ENCODE measurements at regions of chr4 and their contacts with region 1.

Region 1: GRCh38 chr4:70651864-70652506 is 14.3 kb downstream of the JCHAIN start:
- DNase-seq: peak in 6 of 9 donors; percentile 12 to 47 (median 40)
- ATAC-seq: peak; percentile 61
- H3K4me3 ChIP-seq: no peak overlapping the region
- H3K4me3 Mint-ChIP-seq: no peak overlapping the region
- H3K27ac ChIP-seq: no peak overlapping the region
- H3K27ac Mint-ChIP-seq: no peak overlapping the region
- H3K4me1 ChIP-seq: no peaks in the 10 kb centered on the region
- H3K4me1 Mint-ChIP-seq: peaks cover 0 to 6% (median 0%) of the 10 kb centered on the region in 7 donors
- H3K27me3 ChIP-seq: no peaks in the 10 kb centered on the region
- H3K27me3 Mint-ChIP-seq: peaks cover 0 to 25% (median 3%) of the 10 kb centered on the region in 5 donors

Region 2: DNA sequence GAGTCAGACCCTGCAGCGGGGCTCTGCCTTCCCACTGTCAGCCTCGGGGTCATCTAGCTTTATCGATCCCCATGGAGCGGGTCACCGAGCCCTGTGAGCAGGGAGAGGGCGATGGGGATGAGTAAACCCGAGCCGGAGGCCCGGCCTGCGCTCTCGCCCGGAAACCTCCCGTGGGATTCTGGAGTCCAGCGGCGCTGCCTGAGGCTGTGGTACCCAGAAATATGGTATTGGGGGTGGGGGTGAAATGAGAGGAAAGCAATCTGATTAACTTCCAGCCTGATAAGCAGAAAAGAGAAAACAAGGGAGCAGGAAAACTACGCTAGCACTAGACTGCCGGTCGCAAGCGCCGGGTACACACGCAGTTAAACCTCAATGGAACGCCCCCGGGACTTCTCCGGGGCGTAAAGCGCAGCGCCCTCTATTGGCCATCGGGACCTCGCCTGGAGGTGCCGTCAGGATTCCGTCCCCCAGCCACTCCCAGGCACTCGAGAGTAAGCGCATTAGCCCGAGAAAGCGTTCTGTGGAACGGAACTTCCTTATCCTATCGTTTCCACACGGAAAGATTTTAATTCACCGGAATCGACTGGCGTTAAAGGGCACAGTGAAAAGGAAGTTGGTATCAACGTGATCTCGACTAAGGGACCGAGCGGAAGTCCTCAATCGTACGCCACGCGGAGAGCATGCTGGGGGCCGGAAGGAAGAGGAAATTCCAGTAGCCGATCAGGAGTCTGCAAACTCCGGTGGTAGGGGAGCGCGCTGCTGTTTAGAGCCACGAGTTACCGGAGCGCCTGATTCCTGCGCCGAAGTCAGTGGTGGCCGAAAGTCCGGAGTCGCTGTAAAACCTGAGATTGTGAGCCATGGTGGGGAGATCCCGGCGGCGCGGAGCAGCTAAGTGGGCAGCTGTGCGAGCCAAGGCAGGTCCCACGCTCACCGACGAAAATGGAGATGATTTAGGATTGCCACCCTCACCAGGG is 36.1 kb after region 1 on chr4 and contains the start of gene UTP3:
- CTCF ChIA-PET with region 1: interaction called, 4 read pairs
- POLR2A ChIA-PET with region 1: no interaction called
- intact Hi-C with region 1: loop called (anchors 1 kb)
- DNase-seq: peak; percentile 85 to 95 (median 92)
- ATAC-seq: peak; percentile 95
- H3K4me3 ChIP-seq: peak within 1 kb of the TSS; percentile 69
- H3K4me3 Mint-ChIP-seq: peak within 1 kb of the TSS; percentile 93 to 99 (median 98)
- H3K27ac ChIP-seq: peak within 1 kb of the TSS; percentile 94
- H3K27ac Mint-ChIP-seq: peak within 1 kb of the TSS; percentile 93 to 100 (median 99)
- H3K4me1 ChIP-seq: peaks cover 7 to 13% of the 10 kb centered on the region in 2 donors
- H3K4me1 Mint-ChIP-seq: peaks cover 12 to 48% (median 46%) of the 10 kb centered on the region in 7 donors
- H3K27me3 ChIP-seq: no peaks in the 10 kb centered on the region
- H3K27me3 Mint-ChIP-seq: no peaks in the 10 kb centered on the region
- total RNA-seq, gene UTP3: 17.4 to 44.9 (median 36.5) TPM

Region 3: DNA sequence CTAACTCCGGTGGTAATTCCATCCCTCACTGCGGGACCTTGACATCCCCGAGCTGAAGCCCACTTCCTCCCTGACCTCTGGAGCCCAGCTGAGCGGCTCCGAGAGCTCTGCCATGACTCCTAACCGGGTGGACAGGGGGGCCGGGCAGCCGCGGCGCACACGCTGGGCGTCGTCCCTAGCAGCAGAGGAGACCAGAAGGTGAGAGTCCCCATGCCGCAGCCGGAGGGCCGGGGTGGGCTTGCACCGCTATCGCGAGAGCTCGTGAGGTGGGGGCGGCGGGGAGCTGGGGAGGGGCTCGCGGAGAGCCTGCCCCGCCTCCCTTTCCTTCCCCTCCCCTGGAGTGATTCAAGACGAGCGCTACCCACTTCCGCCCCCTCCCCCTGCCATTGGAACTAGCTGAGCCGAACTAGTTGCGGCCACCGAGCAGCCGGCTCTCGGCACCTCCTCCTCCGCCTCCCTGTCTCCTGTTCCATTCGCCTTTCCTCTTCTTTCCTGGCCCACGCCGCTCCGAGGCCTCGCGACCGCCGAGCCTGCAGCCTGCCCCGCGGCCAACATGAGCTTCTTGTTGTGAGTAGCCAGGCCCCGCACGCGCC is 250.1 kb after region 1 on chr4 and contains the start of gene MOB1B:
- CTCF ChIA-PET with region 1: interaction called, 5 read pairs
- POLR2A ChIA-PET with region 1: no interaction called
- intact Hi-C with region 1: loop called (anchors 1 to 5 kb)
- DNase-seq: peak; percentile 59 to 89 (median 84)
- ATAC-seq: peak; percentile 98
- H3K4me3 ChIP-seq: peak within 1 kb of the TSS; percentile 87
- H3K4me3 Mint-ChIP-seq: peak within 1 kb of the TSS; percentile 94 to 100 (median 98)
- H3K27ac ChIP-seq: peak within 1 kb of the TSS; percentile 78
- H3K27ac Mint-ChIP-seq: peak within 1 kb of the TSS; percentile 86 to 96 (median 89)
- H3K4me1 ChIP-seq: peaks cover 6 to 14% of the 10 kb centered on the region in 2 donors
- H3K4me1 Mint-ChIP-seq: peaks cover 23 to 46% (median 40%) of the 10 kb centered on the region in 7 donors
- H3K27me3 ChIP-seq: no peaks in the 10 kb centered on the region
- H3K27me3 Mint-ChIP-seq: peaks cover 0 to 2% (median 0%) of the 10 kb centered on the region in 5 donors
- total RNA-seq, gene MOB1B: 12.0 to 20.3 (median 13.5) TPM

Region 4: DNA sequence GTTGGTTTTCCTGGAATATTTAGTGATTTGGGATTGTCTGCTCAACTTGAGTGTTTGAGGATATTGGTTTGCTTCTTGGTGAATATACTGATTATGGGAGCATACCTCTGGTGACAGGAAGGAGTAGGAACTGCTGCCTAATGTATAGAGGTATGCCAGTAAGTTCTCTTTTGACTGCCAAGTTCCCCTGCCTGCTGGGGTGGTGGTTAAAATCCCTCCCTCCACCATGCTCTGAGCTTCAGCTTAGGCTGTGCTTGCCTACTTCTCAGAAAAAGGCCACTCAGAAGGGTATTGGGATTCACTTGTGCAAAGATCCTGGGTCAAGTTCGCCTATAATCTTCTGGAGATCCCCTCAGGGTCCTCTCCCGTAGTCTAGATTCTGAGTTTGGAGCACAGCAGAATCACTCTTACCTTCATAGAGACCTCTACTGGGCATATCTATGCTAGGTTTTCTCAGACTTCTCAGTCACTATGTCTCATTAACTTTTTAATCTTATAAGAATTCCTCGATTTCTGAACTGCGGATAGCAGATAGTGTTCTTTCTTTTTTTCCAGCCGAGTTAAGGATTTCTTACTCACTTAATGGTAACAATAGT is 296.8 kb after region 1 on chr4:
- CTCF ChIA-PET with region 1: no interaction called
- POLR2A ChIA-PET with region 1: no interaction called
- intact Hi-C with region 1: loop called in 1 of 2 experiments (anchors 1 kb)
- DNase-seq: no peak
- ATAC-seq: peak; percentile 35
- H3K4me3 ChIP-seq: no peak overlapping the region
- H3K4me3 Mint-ChIP-seq: no peak overlapping the region
- H3K27ac ChIP-seq: no peak overlapping the region
- H3K27ac Mint-ChIP-seq: peak overlapping the region in 1 of 9 donors; percentile 11
- H3K4me1 ChIP-seq: no peaks in the 10 kb centered on the region
- H3K4me1 Mint-ChIP-seq: peaks cover 8 to 48% (median 30%) of the 10 kb centered on the region in 7 donors
- H3K27me3 ChIP-seq: no peaks in the 10 kb centered on the region
- H3K27me3 Mint-ChIP-seq: no peaks in the 10 kb centered on the region

Region 5: DNA sequence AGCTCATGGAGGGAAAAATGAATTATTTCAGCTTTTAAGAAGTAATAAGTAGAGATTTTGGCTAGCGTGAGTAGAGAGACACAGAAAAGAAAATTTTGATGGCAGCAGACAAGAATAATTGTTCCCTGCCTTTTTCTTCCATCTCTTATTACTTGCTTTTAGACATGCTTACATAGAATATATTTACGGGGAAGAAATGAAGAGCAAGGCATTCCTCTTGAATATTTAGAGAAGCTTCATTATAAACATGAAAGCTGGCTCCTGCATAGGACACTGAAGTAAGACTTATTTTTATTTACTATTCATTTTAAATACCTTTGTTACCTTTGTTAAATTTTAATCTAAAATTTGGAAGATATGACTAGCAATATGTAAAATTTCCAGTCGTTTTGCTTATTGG is 373.7 kb after region 1 on chr4:
- CTCF ChIA-PET with region 1: interaction called, 4 read pairs
- POLR2A ChIA-PET with region 1: no interaction called
- intact Hi-C with region 1: loop called in 1 of 2 experiments (anchors 1 kb)
- DNase-seq: no peak
- ATAC-seq: no peak
- H3K4me3 ChIP-seq: no peak overlapping the region
- H3K4me3 Mint-ChIP-seq: no peak overlapping the region
- H3K27ac ChIP-seq: no peak overlapping the region
- H3K27ac Mint-ChIP-seq: peak overlapping the region in 2 of 9 donors; percentile 2 to 46
- H3K4me1 ChIP-seq: no peaks in the 10 kb centered on the region
- H3K4me1 Mint-ChIP-seq: peaks cover 0 to 24% (median 8%) of the 10 kb centered on the region in 7 donors
- H3K27me3 ChIP-seq: no peaks in the 10 kb centered on the region
- H3K27me3 Mint-ChIP-seq: no peaks in the 10 kb centered on the region

Region 6: DNA sequence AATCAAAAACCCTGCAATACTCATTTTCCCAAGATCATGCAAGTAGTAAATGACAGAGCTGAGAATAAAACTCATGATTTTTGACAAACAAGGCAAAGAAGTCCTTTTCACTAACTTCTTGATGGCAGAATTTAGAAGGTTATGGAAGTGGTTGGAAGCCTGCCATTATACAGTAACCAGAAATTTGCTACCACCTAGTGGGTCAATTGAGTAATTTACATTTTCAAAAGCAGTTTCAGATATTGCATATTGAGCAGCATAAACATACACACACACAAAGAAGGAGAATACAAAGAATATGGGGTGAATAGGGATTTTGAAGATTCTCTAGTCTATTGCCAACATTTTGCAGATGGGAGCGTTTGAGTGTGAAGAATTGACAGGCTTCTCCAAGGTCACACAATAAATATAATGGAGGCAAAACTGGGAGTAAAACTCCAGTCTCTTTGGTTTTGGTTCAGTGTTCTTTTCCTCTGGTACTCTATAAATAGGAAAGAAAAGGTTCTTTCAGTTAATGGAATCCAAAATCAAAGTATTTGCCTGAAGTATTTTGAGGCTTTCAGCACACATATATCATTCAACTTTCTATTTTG is 1061.7 kb after region 1 on chr4:
- CTCF ChIA-PET with region 1: no interaction called
- POLR2A ChIA-PET with region 1: no interaction called
- intact Hi-C with region 1: loop called (anchors 1 to 2 kb)
- DNase-seq: peak in 5 of 9 donors; percentile 7 to 33 (median 10)
- ATAC-seq: no peak
- H3K4me3 ChIP-seq: no peak overlapping the region
- H3K4me3 Mint-ChIP-seq: no peak overlapping the region
- H3K27ac ChIP-seq: no peak overlapping the region
- H3K27ac Mint-ChIP-seq: no peak overlapping the region
- H3K4me1 ChIP-seq: no peaks in the 10 kb centered on the region
- H3K4me1 Mint-ChIP-seq: no peaks in the 10 kb centered on the region
- H3K27me3 ChIP-seq: no peaks in the 10 kb centered on the region
- H3K27me3 Mint-ChIP-seq: no peaks in the 10 kb centered on the region